Dorsolateral prefrontal cortex (tissue), 120 donors: ENCODE measurements at regions of chr17 and their contacts with region 1.

Region 1: DNA sequence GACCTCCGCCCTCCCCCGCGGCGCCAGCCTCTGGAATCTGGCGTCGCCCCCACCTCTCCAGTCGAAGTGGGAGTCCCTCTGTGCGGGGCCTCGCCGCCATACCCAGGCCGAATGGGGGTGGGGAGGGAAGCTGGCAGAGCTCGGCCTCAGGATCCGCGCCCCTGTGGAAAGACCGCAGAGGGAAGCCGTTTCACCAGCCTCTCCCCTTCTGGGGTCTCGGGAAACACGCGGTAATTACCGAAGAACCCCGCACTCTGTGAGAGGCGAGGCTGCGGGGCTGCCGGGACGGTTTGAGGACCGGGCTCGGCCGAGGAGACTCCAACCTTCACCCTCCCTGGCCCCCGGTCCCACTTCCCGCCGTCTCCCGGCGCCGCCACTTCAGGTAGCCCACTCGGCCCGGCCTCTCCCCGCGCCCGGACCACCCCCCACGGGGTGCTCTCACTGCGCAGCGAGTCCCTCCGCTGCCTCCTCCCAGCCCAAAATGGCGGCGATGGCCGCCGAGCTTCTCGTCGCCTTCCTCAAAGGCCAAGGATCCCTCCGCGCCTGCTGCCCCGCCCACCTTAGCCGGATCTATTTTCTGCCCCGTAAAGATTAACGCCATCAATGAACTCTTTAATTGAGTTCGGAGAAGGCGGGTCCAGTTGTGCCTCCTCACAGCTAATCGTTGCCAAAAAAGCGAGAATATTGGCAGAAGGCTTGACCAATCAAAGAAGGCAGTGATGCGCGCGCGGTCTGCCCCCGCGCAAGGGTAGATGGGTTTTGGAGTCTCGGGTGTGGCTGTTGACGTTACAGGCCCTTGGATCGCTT is 453 bp upstream of the HEXIM2 start:
- DNase-seq: peak; percentile 98 to 100 (median 99)
- H3K4me3 ChIP-seq: peak overlapping the region; percentile 77 to 100 (median 95)
- H3K27ac ChIP-seq: peak overlapping the region; percentile 98 to 100 (median 100)
- H3K27me3 ChIP-seq: no peaks in the 10 kb centered on the region
- CTCF ChIP-seq: peak in 19 of 56 donors; percentile 3 to 48 (median 22)

Region 2: DNA sequence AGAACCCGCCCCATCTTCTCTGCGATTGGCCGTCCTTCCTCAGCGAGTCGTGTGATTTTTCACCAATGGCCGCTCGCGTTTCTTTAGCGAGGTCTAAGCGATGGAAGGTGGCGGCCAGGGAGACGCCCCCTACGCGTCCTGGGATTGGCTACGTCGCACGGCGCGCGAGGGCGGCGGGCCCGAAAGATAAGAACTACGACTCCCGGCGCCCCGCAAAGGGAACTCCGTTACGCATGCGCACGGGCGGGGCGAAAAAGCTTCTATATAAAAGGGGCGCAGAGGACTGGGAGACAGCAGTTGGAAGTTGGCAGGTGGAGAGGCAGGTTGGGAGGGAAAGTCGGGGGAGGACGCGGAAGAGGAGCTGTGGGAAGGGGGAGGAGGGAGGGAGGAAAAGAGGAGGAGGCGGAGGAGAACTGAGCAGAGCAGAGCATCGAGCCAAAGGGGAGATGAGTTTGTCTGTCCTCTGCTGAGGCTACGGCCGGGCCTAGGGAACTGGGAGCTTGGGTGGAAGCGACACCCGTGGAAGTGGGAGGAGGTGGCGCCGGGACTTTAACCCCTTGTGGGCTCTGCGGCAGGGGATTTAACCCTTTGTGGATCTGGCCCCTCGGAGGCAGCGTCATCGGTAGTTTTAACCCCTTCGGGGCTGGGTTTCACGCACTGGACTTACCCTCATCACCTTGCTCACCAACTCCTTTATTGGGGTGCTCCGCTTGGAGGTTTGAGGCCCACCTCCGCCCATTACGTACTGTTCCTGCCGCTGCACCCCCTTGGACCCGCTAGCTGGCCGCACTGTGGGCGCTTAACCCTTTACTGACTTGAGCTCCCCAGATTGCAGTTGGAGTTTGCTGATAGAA is 12.8 kb before region 1 on chr17 and contains the start of gene HEXIM1:
- intact Hi-C with region 1: loop called (anchors 1 kb)
- DNase-seq: peak; percentile 98 to 100 (median 99)
- H3K4me3 ChIP-seq: peak within 1 kb of the TSS; percentile 67 to 95 (median 81)
- H3K27ac ChIP-seq: peak within 1 kb of the TSS; percentile 96 to 100 (median 100)
- H3K27me3 ChIP-seq: no peaks in the 10 kb centered on the region
- CTCF ChIP-seq: peak in 4 of 56 donors; percentile 5 to 10 (median 8)
- total RNA-seq, gene HEXIM1: 21.0 to 74.9 (median 50.4) TPM

Region 3: GRCh38 chr17:45197555-45198334 is 36.5 kb after region 1 on chr17:
- intact Hi-C with region 1: loop called in 1 of 2 experiments (anchors 5 kb)
- DNase-seq: peak; percentile 80 to 92 (median 86)
- H3K4me3 ChIP-seq: peak overlapping the region in 26 of 59 donors; percentile 0 to 43 (median 29)
- H3K27ac ChIP-seq: peak overlapping the region in 47 of 59 donors; percentile 2 to 77 (median 50)
- H3K27me3 ChIP-seq: no peaks in the 10 kb centered on the region
- CTCF ChIP-seq: peak; percentile 93 to 100 (median 99)